Activated B cell treated with CpG ODN at 0.5 μM for 24 hours (primary cell): ENCODE measurements at regions of chr14 and their contacts with region 1.

Region 1: DNA sequence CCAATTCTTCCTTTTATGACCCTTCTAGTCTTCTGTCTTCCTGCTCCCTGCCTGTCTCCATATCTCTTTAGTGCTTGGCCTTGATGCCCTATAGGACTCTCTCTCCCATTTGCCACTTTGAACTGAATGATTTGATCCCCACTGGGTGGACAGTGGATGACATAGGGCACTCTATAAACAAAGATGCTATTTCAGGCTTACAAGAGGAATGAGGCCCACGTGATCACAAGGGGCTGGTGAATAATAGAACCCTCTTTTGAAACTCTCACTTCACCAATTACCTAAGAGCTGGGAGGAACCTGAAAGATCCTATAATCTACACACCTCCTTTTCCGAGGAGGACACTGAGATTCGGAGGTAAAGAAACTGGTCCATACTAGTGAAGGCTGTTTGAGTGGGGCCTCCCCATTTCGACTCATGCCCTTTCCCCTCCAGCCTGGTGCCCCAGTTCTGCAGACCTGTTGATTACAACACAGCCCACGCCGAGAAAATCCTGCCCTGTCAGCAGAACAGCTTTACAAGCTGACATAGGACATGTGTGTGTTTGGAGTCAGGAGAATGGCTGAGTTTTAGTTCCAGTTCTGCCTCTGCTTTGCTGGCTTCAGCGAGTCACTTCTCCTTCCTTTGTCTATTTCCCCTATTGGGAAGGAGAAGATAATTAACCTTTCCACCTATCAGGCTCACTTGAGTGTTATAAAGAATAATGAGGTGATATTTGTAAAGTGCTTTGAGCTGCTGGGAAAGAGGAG is 400.3 kb downstream of the ZFP36L1 start:
- DNase-seq: no peak
- ATAC-seq: no peak
- H3K4me3 Mint-ChIP-seq: peak overlapping the region; percentile 39
- H3K27ac Mint-ChIP-seq: peak overlapping the region; percentile 84
- H3K4me1 Mint-ChIP-seq: peaks cover 58% of the 10 kb centered on the region
- H3K27me3 Mint-ChIP-seq: no peaks in the 10 kb centered on the region
- CTCF ChIP-seq: no peak

Region 2: GRCh38 chr14:68042608-68043210 is 349.9 kb before region 1 on chr14:
- CTCF ChIA-PET with region 1: no interaction called
- POLR2A ChIA-PET with region 1: no interaction called
- intact Hi-C with region 1: no loop called
- DNase-seq: no peak
- ATAC-seq: no peak
- H3K4me3 Mint-ChIP-seq: no peak overlapping the region
- H3K27ac Mint-ChIP-seq: no peak overlapping the region
- H3K4me1 Mint-ChIP-seq: peaks cover 9% of the 10 kb centered on the region
- H3K27me3 Mint-ChIP-seq: no peaks in the 10 kb centered on the region
- CTCF ChIP-seq: no peak

Region 3: DNA sequence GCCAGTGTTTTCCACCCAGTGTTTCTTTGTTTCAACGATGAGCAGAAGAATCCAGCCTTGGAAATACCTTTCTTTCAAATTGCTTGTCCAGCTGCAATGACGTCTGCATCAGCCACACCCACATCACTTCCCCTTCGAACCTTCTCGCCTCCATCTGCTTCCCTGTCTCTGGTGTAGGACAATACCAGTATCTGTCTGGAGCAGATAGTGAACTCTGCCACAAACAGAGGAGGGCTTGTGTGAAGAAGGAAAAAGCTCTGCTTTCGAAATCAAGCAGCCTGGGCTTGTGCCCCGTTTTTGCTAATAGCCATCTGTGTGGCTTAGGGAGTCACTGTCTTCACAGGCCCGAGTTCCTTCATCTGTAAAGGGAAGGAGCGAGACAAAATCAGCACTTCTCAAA is 15.1 kb before region 1 on chr14:
- CTCF ChIA-PET with region 1: interaction called, 3 read pairs
- POLR2A ChIA-PET with region 1: interaction called, 11 read pairs
- intact Hi-C with region 1: loop called (anchors 2 kb)
- DNase-seq: no peak
- ATAC-seq: peak; percentile 43
- H3K4me3 Mint-ChIP-seq: peak overlapping the region; percentile 50
- H3K27ac Mint-ChIP-seq: peak overlapping the region; percentile 83
- H3K4me1 Mint-ChIP-seq: peaks cover 69% of the 10 kb centered on the region
- H3K27me3 Mint-ChIP-seq: no peaks in the 10 kb centered on the region
- CTCF ChIP-seq: no peak

Region 4: GRCh38 chr14:68440820-68441219 is 48.3 kb after region 1 on chr14:
- CTCF ChIA-PET with region 1: no interaction called
- POLR2A ChIA-PET with region 1: no interaction called
- intact Hi-C with region 1: no loop called
- DNase-seq: no peak
- ATAC-seq: no peak
- H3K4me3 Mint-ChIP-seq: no peak overlapping the region
- H3K27ac Mint-ChIP-seq: no peak overlapping the region
- H3K4me1 Mint-ChIP-seq: peaks cover 23% of the 10 kb centered on the region
- H3K27me3 Mint-ChIP-seq: no peaks in the 10 kb centered on the region
- CTCF ChIP-seq: no peak

Region 5: GRCh38 chr14:68523989-68524725 is 131.6 kb after region 1 on chr14:
- CTCF ChIA-PET with region 1: no interaction called
- POLR2A ChIA-PET with region 1: no interaction called
- intact Hi-C with region 1: no loop called
- DNase-seq: no peak
- ATAC-seq: no peak
- H3K4me3 Mint-ChIP-seq: no peak overlapping the region
- H3K27ac Mint-ChIP-seq: no peak overlapping the region
- H3K4me1 Mint-ChIP-seq: peaks cover 69% of the 10 kb centered on the region
- H3K27me3 Mint-ChIP-seq: no peaks in the 10 kb centered on the region
- CTCF ChIP-seq: no peak